ENCODE measurements at regions of chr12 and their contacts with region 1.

Region 1: DNA sequence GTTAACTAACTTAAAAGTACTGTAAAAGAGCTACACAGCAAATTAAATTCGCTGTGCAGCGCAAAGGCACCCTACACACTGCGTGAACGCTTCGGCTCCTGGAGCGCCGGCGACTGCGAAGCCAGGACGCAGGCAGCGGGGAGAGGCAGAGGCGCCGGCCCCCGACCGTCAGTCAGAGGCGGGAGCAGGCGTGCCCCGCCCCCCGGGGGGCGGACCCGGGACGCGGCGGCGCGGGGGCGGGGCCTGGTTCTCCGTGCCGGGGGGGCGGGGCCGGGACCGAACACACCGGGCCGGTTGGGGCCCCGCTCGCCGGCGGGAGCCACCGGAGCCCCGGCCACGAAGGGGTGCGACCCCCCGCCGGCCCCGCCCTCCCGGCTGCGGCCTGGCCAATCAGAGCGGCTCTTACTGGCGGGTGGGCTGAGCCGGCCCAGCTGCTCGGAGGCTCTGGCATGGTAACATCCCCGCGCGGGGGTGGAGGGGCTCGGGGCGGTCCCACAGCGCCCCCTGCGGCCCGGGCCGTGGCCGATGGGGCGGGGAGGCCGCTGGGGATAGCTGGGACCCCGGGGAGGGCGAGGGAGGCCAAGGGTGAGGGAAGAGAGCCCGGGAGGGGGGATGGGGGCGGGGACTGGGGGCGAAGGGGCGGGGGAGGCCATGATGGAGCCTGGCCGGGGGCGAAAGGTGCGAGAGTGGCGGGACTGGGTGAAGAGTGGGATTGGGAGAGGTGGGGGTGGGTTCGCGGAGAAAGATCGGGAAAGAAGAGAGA is at the start of gene PRPF40B:
- DNase-seq: peak; percentile 91
- H3K4me3 Mint-ChIP-seq: peak within 1 kb of the TSS; percentile 78
- H3K27ac Mint-ChIP-seq: peak within 1 kb of the TSS; percentile 73
- H3K4me1 Mint-ChIP-seq: peaks cover 20% of the 10 kb centered on the region
- H3K27me3 Mint-ChIP-seq: peaks cover 3% of the 10 kb centered on the region
- total RNA-seq, gene PRPF40B: 6.2 to 8.9 TPM

Region 2: DNA sequence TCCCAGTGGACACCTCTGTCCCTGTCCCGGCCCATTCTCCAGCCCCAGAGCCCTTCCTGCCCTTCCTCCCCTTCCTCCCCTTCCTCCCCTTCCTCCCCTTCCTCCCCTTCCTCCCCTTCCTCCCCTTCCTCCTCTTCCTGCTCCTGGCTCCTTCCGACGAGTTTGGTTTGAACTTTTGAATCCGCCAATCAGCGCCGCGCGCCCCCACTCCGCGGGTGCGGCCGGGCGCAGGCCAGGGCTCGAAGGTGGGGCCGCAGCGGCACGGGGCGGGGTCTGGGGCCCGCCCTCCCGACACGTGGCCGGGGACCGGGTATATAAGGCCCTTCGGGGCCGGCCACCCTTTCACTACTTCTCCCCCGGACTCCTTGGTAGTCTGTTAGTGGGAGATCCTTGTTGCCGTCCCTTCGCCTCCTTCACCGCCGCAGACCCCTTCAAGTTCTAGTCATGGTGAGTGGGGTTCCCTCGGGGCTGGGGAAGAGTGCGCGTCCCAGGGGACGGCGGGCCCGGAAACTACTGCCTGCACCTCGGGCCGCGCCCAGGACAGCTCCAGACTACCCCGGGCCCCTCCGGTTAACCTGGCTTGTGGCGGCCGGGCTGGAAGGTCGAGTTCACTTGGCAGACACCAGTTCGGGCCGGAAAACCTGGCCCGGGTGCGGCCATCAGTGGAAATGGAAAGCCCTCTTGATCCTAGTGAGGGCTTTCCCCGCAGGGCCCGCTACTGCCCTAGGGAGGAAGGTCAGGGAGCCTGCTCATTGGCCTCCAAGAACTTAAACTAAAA is 358.4 kb before region 1 on chr12 and contains the start of gene TUBA1C:
- CTCF ChIA-PET with region 1: no interaction called
- POLR2A ChIA-PET with region 1: interaction called, 3 read pairs
- intact Hi-C with region 1: loop called (anchors 2 kb)
- DNase-seq: peak; percentile 93
- H3K4me3 Mint-ChIP-seq: peak within 1 kb of the TSS; percentile 99
- H3K27ac Mint-ChIP-seq: peak within 1 kb of the TSS; percentile 99
- H3K4me1 Mint-ChIP-seq: peaks cover 47% of the 10 kb centered on the region
- H3K27me3 Mint-ChIP-seq: no peaks in the 10 kb centered on the region
- total RNA-seq, gene TUBA1C: 353 to 360 TPM

Region 3: GRCh38 chr12:49567611-49568441 is 55.5 kb before region 1 on chr12 and contains the start of gene MCRS1:
- CTCF ChIA-PET with region 1: interaction called, 6 read pairs
- POLR2A ChIA-PET with region 1: no interaction called
- intact Hi-C with region 1: loop called (anchors 1 kb)
- DNase-seq: peak; percentile 90
- H3K4me3 Mint-ChIP-seq: peak within 1 kb of the TSS; percentile 98
- H3K27ac Mint-ChIP-seq: peak within 1 kb of the TSS; percentile 96
- H3K4me1 Mint-ChIP-seq: peaks cover 47% of the 10 kb centered on the region
- H3K27me3 Mint-ChIP-seq: no peaks in the 10 kb centered on the region
- total RNA-seq, gene MCRS1: 52.3 to 56.8 TPM

Region 4: DNA sequence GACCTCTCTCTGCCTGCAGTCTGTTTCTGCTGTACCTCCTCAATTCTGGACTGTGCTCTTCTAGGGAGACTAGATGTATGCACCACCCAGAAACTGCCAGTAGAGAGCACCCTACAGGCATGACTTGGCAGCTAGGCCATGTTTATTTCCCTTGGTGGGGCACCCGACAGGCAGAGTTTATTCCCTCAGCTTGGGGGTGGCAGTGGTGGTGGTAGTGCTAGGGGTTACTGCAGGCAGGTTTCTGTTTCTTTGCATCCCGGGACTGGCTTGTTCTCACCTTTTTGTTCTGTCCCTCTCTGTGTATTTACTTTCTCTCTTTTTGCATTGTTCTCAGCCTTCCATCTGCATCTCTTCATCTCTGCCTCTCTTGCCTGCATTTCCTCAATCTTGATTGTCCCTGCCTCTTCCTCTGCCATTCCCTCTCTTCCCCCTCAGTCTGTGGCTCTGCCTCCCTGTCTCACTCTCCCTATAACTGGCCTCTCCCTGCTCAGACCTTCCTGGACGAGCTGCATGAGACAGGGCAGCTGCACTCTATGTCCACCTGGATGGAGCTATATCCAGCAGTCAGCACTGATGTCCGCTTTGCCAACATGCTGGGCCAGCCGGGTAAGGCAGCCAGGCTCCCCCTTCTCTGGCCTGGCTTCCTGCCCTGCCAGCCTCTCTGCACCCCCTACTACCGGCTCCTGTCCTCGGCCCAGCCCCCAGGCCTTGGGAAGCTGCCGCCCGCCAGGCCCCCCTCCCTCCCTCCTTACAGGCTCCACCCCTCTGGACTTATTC is 13.8 kb after region 1 on chr12:
- CTCF ChIA-PET with region 1: interaction called, 40 read pairs
- POLR2A ChIA-PET with region 1: no interaction called
- intact Hi-C with region 1: no loop called
- DNase-seq: peak; percentile 70
- H3K4me3 Mint-ChIP-seq: no peak overlapping the region
- H3K27ac Mint-ChIP-seq: peak overlapping the region; percentile 7
- H3K4me1 Mint-ChIP-seq: peaks cover 6% of the 10 kb centered on the region
- H3K27me3 Mint-ChIP-seq: no peaks in the 10 kb centered on the region

Region 5: GRCh38 chr12:49707128-49707811 is 83.9 kb after region 1 on chr12 and contains the start of gene FMNL3:
- CTCF ChIA-PET with region 1: interaction called, 12 read pairs
- POLR2A ChIA-PET with region 1: interaction called, 11 read pairs
- intact Hi-C with region 1: no loop called
- DNase-seq: peak; percentile 98
- H3K4me3 Mint-ChIP-seq: peak within 1 kb of the TSS; percentile 85
- H3K27ac Mint-ChIP-seq: peak within 1 kb of the TSS; percentile 72
- H3K4me1 Mint-ChIP-seq: peaks cover 43% of the 10 kb centered on the region
- H3K27me3 Mint-ChIP-seq: peaks cover 3% of the 10 kb centered on the region
- total RNA-seq, gene FMNL3: 31.2 to 31.9 TPM